ENCODE measurements at regions of chr4 and their contacts with region 1.

Region 1: DNA sequence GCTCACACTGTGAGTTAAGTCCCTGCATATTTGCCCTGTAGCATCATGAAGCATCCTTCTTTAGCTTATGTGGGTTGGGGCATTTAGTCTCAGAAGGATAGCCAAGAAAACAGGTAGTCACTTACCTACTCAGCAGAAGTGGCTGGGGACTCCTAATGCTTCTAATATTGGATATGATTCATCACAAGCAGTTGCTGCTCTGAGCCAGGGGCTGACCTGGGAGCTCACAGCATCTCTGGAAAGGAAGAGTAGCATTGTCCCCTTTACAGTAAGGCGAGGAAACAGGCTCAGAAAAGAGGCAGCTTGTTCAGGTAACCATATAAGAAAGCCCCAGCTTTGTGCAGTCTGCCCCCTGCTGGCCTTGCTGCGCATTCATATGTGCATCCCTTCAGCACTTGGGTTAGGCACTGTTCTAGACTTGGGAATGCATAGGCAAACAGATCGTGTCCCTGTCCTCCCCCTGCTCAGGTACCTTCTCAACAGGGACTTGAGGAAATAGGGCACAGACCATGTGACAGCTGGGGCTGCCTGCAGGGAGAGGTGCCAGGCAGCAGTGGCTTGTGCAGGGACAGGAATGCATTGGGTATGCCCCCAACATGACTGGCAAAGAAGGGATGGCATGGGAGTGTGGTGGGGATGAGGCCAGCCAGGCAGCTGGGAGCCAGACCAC is 35.7 kb upstream of the TBC1D14 start:
- DNase-seq: peak; percentile 70 to 80 (median 72)
- H3K4me3 ChIP-seq: no peak overlapping the region
- H3K4me3 Mint-ChIP-seq: no peak overlapping the region
- H3K27ac ChIP-seq: no peak overlapping the region
- H3K27ac Mint-ChIP-seq: peak overlapping the region in 5 of 7 donors; percentile 32 to 76 (median 52)
- H3K4me1 ChIP-seq: no peaks in the 10 kb centered on the region
- H3K4me1 Mint-ChIP-seq: peaks cover 0 to 6% (median 2%) of the 10 kb centered on the region in 4 donors
- H3K27me3 ChIP-seq: no peaks in the 10 kb centered on the region
- H3K27me3 Mint-ChIP-seq: no peaks in the 10 kb centered on the region

Region 2: DNA sequence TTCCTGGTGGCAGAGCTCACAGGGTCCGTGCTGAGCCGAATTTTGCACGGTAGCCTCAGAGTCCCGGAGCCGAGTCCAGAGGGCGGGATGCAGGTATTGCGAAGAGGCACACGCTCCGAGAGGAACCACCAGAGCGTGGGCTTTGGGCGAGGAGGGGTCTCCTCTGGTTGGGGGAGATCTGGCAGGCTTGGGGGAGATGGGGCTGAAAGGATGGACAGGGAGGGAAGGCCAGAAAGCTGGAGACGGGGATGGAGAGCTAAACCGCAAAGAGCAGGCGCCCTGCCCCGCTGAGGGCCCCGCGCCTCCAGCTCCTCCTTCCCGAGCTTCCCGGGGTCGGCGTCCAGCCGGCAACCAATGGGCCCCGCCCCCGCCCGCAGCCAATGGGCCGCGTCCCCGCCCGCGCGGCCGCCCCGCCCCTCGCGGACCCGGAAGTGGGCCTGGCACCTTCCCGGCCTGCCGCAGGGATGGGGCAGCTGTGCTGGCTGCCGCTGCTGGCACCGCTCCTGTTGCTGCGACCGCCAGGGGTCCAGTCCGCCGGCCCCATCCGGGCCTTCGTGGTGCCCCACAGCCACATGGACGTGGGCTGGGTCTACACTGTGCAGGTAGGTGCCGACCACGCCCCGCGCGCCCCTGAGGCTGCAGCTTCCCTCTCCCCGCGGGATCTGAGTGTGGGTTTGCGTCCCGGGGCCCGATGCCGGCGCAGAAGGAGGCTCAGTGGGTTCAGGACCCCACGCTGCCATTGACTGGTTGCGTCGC is 299.0 kb before region 1 on chr4 and contains the start of gene MAN2B2:
- CTCF ChIA-PET with region 1: interaction called, 10 read pairs
- POLR2A ChIA-PET with region 1: interaction called, 3 read pairs
- intact Hi-C with region 1: no loop called
- DNase-seq: peak; percentile 76 to 83 (median 77)
- H3K4me3 ChIP-seq: peak within 1 kb of the TSS; percentile 84 to 97
- H3K4me3 Mint-ChIP-seq: peak within 1 kb of the TSS; percentile 88 to 95 (median 90)
- H3K27ac ChIP-seq: peak within 1 kb of the TSS; percentile 77
- H3K27ac Mint-ChIP-seq: peak within 1 kb of the TSS; percentile 83 to 91 (median 88)
- H3K4me1 ChIP-seq: peaks cover 26% of the 10 kb centered on the region
- H3K4me1 Mint-ChIP-seq: peaks cover 9 to 34% (median 12%) of the 10 kb centered on the region in 4 donors
- H3K27me3 ChIP-seq: no peaks in the 10 kb centered on the region
- H3K27me3 Mint-ChIP-seq: no peaks in the 10 kb centered on the region
- total RNA-seq, gene MAN2B2: 51.5 to 53.2 TPM

Region 3: DNA sequence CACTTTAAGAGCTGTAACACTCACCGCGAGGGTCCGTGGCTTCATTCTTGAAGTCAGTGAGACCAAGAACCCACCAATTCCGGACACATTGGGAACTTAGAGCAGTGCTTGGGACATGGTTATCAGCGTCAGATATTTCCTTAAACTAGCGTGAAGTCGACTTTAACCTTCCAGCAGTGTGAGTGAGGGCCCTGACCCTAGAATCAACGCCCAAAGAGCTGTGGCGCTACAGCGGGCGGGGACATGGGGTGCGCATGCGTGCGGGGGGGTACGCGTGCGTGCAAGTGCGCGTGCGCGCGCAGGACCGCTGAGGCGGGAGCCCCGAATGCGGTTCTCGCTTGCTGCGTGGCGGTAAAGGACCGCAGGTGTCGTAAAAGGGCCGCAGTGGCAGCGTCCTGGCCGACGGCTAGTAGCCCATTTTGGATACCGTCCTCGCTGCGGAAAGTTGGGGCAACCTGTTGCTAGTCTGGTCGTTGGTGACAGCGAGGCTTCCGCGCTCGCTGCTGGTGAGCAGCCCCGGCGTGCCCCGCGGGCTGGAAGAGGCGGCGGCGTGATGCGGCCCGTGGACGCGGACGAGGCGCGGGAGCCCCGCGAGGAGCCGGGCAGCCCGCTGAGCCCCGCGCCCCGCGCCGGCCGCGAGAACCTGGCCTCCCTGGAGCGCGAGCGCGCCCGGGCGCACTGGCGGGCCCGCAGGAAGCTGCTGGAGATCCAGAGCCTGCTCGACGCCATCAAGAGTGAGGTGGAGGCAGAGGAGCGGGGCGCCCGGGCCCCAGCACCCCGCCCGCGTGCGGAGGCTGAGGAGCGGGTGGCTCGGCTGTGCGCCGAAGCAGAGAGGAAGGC is 200.0 kb before region 1 on chr4:
- CTCF ChIA-PET with region 1: interaction called, 32 read pairs
- POLR2A ChIA-PET with region 1: interaction called, 27 read pairs
- intact Hi-C with region 1: loop called (anchors 1 kb)
- DNase-seq: peak; percentile 94 to 96 (median 96)
- H3K4me3 ChIP-seq: peak overlapping the region; percentile 59 to 65
- H3K4me3 Mint-ChIP-seq: peak overlapping the region; percentile 92 to 99 (median 98)
- H3K27ac ChIP-seq: peak overlapping the region; percentile 71
- H3K27ac Mint-ChIP-seq: peak overlapping the region; percentile 95 to 99 (median 98)
- H3K4me1 ChIP-seq: peaks cover 36% of the 10 kb centered on the region
- H3K4me1 Mint-ChIP-seq: peaks cover 39 to 59% (median 49%) of the 10 kb centered on the region in 4 donors
- H3K27me3 ChIP-seq: no peaks in the 10 kb centered on the region
- H3K27me3 Mint-ChIP-seq: no peaks in the 10 kb centered on the region

Region 4: GRCh38 chr4:6727081-6727942 is 146.6 kb before region 1 on chr4:
- CTCF ChIA-PET with region 1: interaction called, 293 read pairs
- POLR2A ChIA-PET with region 1: no interaction called
- intact Hi-C with region 1: no loop called
- DNase-seq: no peak
- H3K4me3 ChIP-seq: no peak overlapping the region
- H3K4me3 Mint-ChIP-seq: no peak overlapping the region
- H3K27ac ChIP-seq: no peak overlapping the region
- H3K27ac Mint-ChIP-seq: peak overlapping the region in 3 of 7 donors; percentile 17 to 78 (median 72)
- H3K4me1 ChIP-seq: no peaks in the 10 kb centered on the region
- H3K4me1 Mint-ChIP-seq: peaks cover 3 to 16% (median 9%) of the 10 kb centered on the region in 4 donors
- H3K27me3 ChIP-seq: no peaks in the 10 kb centered on the region
- H3K27me3 Mint-ChIP-seq: no peaks in the 10 kb centered on the region

Region 5: DNA sequence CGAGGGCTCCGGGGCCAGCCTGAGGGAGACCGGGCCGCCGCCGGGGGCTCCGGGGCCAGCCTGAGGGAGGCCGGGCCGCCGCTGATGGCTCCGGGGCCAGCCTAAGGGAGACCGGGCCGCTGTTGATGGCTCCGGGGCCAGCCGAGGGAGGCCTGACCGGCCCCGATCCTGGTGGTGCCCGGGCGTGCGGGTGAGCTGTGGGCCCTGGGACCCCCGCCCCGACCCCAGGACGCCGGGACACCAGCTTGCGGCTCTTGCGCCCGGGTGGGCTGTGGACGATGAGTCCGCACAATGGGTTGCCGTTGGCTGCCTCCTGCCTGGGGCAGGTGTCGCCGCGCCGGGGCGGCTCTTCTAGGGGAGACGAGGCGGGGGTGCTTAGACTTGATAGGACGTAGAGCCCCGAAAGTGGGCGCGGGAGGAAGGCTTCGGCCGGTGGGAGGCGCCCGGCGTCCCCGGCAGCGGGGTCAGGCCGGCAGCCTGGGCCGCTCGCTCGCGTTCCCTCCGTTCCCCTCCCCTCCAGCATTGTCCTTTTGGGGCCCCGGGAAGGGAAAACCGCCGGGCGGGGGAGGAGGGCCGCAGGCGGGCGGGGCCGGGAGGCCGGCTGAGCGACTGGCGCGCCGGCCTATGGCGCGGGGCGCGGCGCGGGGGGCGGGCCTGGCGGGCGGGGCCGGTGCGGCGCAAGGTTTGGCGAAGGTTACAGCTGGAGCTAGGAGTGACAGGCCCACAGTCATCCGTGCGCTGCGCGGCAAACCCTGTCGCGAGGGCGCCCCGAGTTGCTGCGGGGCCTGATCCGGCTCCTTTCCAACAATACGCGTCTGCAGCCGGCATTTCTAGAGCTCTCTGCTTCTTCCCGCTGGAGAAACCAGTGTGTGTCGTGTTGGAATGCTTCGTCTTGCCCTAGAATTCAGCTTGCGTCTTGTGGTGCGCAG is 90.6 kb before region 1 on chr4:
- CTCF ChIA-PET with region 1: interaction called, 39 read pairs
- POLR2A ChIA-PET with region 1: interaction called, 10 read pairs
- intact Hi-C with region 1: loop called (anchors 5 kb)
- DNase-seq: peak; percentile 87 to 89 (median 88)
- H3K4me3 ChIP-seq: peak overlapping the region; percentile 38 to 71
- H3K4me3 Mint-ChIP-seq: peak overlapping the region; percentile 84 to 92 (median 88)
- H3K27ac ChIP-seq: peak overlapping the region; percentile 96
- H3K27ac Mint-ChIP-seq: peak overlapping the region; percentile 88 to 93 (median 91)
- H3K4me1 ChIP-seq: peaks cover 44% of the 10 kb centered on the region
- H3K4me1 Mint-ChIP-seq: peaks cover 32 to 61% (median 47%) of the 10 kb centered on the region in 4 donors
- H3K27me3 ChIP-seq: no peaks in the 10 kb centered on the region
- H3K27me3 Mint-ChIP-seq: no peaks in the 10 kb centered on the region

Region 6: GRCh38 chr4:6885951-6886557 is 12.1 kb after region 1 on chr4:
- CTCF ChIA-PET with region 1: interaction called, 52 read pairs
- POLR2A ChIA-PET with region 1: interaction called, 3 read pairs
- intact Hi-C with region 1: no loop called
- DNase-seq: no peak
- H3K4me3 ChIP-seq: no peak overlapping the region
- H3K4me3 Mint-ChIP-seq: no peak overlapping the region
- H3K27ac ChIP-seq: no peak overlapping the region
- H3K27ac Mint-ChIP-seq: no peak overlapping the region
- H3K4me1 ChIP-seq: no peaks in the 10 kb centered on the region
- H3K4me1 Mint-ChIP-seq: peaks cover 0 to 5% (median 3%) of the 10 kb centered on the region in 4 donors
- H3K27me3 ChIP-seq: no peaks in the 10 kb centered on the region
- H3K27me3 Mint-ChIP-seq: no peaks in the 10 kb centered on the region

Region 7: GRCh38 chr4:6909073-6909965 is 35.4 kb after region 1 on chr4 and contains the start of gene TBC1D14:
- CTCF ChIA-PET with region 1: interaction called, 11 read pairs
- POLR2A ChIA-PET with region 1: no interaction called
- intact Hi-C with region 1: no loop called
- DNase-seq: peak; percentile 88 to 92 (median 90)
- H3K4me3 ChIP-seq: peak within 1 kb of the TSS; percentile 77 to 78
- H3K4me3 Mint-ChIP-seq: peak within 1 kb of the TSS; percentile 90 to 95 (median 91)
- H3K27ac ChIP-seq: peak within 1 kb of the TSS; percentile 81
- H3K27ac Mint-ChIP-seq: peak within 1 kb of the TSS; percentile 88 to 96 (median 91)
- H3K4me1 ChIP-seq: peaks cover 63% of the 10 kb centered on the region
- H3K4me1 Mint-ChIP-seq: peaks cover 30 to 67% (median 52%) of the 10 kb centered on the region in 4 donors
- H3K27me3 ChIP-seq: no peaks in the 10 kb centered on the region
- H3K27me3 Mint-ChIP-seq: no peaks in the 10 kb centered on the region
- total RNA-seq, gene TBC1D14: 73.7 to 80.7 TPM